B cell (primary cell): ENCODE measurements at regions of chr16 and their contacts with region 1.

Region 1: DNA sequence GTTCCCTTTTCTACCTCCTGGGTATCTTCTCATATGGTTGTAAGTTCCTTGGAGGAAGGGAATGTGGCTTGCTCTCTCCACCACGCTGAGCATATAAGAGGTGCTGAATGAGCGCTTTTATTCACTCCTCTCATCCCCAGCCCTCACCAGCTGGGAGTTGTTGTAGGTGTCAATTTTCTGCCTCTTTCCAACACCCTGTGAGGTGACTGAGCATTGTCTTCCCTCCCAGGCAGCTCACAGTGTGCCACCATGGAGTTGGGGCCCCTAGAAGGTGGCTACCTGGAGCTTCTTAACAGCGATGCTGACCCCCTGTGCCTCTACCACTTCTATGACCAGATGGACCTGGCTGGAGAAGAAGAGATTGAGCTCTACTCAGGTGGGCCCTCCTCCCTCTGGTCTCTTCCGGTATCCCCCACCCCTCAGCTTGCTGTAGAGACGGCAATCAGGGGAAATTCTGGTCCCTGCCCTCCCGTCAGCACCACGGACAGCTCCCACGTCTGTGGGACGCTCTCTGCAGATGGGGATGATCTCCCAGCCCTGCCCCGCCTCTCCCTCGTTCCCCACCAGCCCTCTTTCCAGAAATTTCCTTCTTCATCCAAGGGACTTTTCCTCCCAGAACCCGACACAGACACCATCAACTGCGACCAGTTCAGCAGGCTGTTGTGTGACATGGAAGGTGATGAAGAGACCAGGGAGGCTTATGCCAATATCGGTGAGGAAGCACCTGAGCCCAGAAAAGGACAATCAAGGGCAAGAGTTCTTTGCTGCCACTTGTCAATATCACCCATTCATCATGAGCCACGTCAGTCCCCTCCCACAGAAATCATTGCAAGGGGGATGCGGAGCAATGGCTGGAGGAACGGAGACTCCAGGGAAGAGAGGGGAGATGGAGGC is 18.3 kb downstream of the CIITA start:
- DNase-seq: peak; percentile 72
- ATAC-seq: no peak
- H3K4me3 ChIP-seq: no peak overlapping the region
- H3K4me3 Mint-ChIP-seq: peak overlapping the region; percentile 78
- H3K27ac ChIP-seq: peak overlapping the region; percentile 68 to 77
- H3K27ac Mint-ChIP-seq: peak overlapping the region; percentile 92
- H3K4me1 ChIP-seq: peaks cover 88 to 93% of the 10 kb centered on the region in 2 donors
- H3K4me1 Mint-ChIP-seq: peaks cover 93% of the 10 kb centered on the region
- H3K27me3 ChIP-seq: no peaks in the 10 kb centered on the region
- H3K27me3 Mint-ChIP-seq: no peaks in the 10 kb centered on the region
- CTCF ChIP-seq: no peak

Region 2: DNA sequence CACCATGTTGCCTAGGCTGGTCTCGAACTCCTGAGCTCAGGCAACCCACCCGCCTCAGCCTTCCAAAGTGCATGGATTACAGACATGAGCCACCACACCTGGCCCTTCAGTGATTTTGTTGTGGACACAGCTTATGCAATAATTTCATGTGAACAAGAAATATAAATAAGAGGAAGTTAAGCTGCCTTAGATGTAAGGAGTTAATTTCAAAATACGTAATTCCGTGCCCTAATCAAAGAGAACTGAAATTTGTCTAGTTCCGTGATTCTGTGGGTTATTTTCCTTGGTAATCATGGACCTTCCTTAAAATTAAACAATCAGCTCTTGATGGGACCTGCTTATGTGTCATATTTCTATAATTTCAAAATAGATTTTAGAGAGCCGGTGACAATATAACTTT is 88.6 kb before region 1 on chr16:
- CTCF ChIA-PET with region 1: interaction called, 4 read pairs
- POLR2A ChIA-PET with region 1: interaction called, 4 read pairs
- intact Hi-C with region 1: loop called (anchors 1 kb)
- DNase-seq: peak; percentile 44
- ATAC-seq: peak; percentile 37
- H3K4me3 ChIP-seq: no peak overlapping the region
- H3K4me3 Mint-ChIP-seq: peak overlapping the region; percentile 74
- H3K27ac ChIP-seq: no peak overlapping the region
- H3K27ac Mint-ChIP-seq: peak overlapping the region; percentile 84
- H3K4me1 ChIP-seq: peaks cover 8 to 45% of the 10 kb centered on the region in 2 donors
- H3K4me1 Mint-ChIP-seq: peaks cover 64% of the 10 kb centered on the region
- H3K27me3 ChIP-seq: no peaks in the 10 kb centered on the region
- H3K27me3 Mint-ChIP-seq: no peaks in the 10 kb centered on the region
- CTCF ChIP-seq: no peak

Region 3: DNA sequence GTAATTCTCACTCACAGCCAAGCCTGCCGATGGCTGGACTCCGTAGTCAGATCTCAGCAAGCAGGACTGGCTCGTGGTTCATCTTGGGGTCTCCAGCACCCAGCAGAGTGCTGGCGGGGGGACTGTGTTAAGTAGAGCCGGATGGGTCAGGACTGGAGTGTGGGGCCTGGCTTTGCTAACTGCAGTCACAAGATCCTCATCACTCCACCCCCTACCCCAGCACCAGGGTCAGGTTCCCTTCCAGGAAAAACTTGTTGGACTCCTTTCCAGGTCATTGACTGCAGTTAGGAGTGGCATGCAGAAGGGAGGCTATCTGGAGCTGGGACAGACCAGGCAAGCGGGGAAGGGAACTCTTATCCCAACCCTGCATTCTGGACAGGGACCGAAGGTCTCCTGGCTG is 12.3 kb before region 1 on chr16:
- CTCF ChIA-PET with region 1: interaction called, 120 read pairs
- POLR2A ChIA-PET with region 1: interaction called, 122 read pairs
- intact Hi-C with region 1: loop called (anchors 1 kb)
- DNase-seq: no peak
- ATAC-seq: no peak
- H3K4me3 ChIP-seq: peak overlapping the region in 2 of 5 experiments; percentile 4 to 8
- H3K4me3 Mint-ChIP-seq: peak overlapping the region; percentile 77
- H3K27ac ChIP-seq: peak overlapping the region; percentile 31 to 74
- H3K27ac Mint-ChIP-seq: peak overlapping the region; percentile 87
- H3K4me1 ChIP-seq: peaks cover 75 to 87% of the 10 kb centered on the region in 2 donors
- H3K4me1 Mint-ChIP-seq: peaks cover 74% of the 10 kb centered on the region
- H3K27me3 ChIP-seq: no peaks in the 10 kb centered on the region
- H3K27me3 Mint-ChIP-seq: no peaks in the 10 kb centered on the region
- CTCF ChIP-seq: no peak

Region 4: DNA sequence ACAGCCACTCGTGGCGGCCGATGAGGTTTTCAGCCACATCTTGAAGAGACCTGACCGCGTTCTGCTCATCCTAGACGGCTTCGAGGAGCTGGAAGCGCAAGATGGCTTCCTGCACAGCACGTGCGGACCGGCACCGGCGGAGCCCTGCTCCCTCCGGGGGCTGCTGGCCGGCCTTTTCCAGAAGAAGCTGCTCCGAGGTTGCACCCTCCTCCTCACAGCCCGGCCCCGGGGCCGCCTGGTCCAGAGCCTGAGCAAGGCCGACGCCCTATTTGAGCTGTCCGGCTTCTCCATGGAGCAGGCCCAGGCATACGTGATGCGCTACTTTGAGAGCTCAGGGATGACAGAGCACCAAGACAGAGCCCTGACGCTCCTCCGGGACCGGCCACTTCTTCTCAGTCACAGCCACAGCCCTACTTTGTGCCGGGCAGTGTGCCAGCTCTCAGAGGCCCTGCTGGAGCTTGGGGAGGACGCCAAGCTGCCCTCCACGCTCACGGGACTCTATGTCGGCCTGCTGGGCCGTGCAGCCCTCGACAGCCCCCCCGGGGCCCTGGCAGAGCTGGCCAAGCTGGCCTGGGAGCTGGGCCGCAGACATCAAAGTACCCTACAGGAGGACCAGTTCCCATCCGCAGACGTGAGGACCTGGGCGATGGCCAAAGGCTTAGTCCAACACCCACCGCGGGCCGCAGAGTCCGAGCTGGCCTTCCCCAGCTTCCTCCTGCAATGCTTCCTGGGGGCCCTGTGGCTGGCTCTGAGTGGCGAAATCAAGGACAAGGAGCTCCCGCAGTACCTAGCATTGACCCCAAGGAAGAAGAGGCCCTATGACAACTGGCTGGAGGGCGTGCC is 11.8 kb after region 1 on chr16:
- CTCF ChIA-PET with region 1: interaction called, 141 read pairs
- POLR2A ChIA-PET with region 1: interaction called, 41 read pairs
- intact Hi-C with region 1: loop called (anchors 1 kb)
- DNase-seq: no peak
- ATAC-seq: no peak
- H3K4me3 ChIP-seq: no peak overlapping the region
- H3K4me3 Mint-ChIP-seq: no peak overlapping the region
- H3K27ac ChIP-seq: peak overlapping the region in 1 of 2 donors; percentile 95
- H3K27ac Mint-ChIP-seq: peak overlapping the region; percentile 67
- H3K4me1 ChIP-seq: peaks cover 43 to 55% of the 10 kb centered on the region in 2 donors
- H3K4me1 Mint-ChIP-seq: peaks cover 70% of the 10 kb centered on the region
- H3K27me3 ChIP-seq: no peaks in the 10 kb centered on the region
- H3K27me3 Mint-ChIP-seq: no peaks in the 10 kb centered on the region
- CTCF ChIP-seq: no peak

Region 5: DNA sequence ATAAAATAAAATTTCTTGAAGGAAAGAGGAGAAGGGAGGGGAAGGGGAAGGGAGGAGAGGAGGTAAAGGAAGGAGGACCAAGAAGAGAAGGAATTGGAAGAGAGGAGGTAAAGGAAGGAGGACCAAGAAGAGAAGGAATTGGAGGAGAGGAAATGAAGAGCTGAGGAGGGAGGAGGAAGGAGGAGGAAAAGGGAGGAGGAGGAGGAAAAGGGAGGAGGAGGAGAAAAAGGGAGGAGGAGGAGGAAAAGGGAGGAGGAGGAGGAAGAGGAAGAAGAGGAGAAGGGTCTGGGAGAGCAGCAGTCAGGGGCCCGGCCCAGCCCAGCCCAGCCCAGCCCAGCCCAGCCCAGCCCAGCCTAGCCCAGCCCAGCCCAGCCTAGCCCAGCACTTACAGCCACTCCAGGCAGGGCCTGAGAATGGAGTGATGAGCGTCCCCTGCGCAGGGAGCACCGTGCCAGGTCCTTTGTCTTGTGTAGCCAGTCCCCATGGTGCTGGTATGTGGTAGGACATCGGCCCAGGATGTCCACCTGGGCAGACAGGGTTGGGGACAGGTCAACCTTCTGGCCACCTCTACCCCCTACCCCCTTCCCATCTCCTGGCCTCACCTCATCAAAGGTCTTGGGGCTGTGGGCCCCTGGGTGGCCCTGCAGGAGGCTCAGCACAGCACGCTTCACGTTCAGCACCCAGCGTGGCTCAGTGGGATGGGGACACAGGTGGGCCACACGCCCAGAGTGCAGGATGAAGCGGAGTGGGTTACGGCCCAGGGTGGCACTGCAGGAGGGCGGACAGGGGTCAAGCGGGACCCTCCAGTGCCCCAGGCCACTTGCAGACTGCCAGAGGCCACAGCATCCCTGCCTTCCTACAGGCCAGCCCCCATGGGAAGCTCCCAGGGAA is 620.5 kb after region 1 on chr16:
- CTCF ChIA-PET with region 1: no interaction called
- POLR2A ChIA-PET with region 1: interaction called, 10 read pairs
- intact Hi-C with region 1: no loop called
- DNase-seq: no peak
- ATAC-seq: no peak
- H3K4me3 ChIP-seq: no peak overlapping the region
- H3K4me3 Mint-ChIP-seq: no peak overlapping the region
- H3K27ac ChIP-seq: no peak overlapping the region
- H3K27ac Mint-ChIP-seq: no peak overlapping the region
- H3K4me1 ChIP-seq: peaks cover 0 to 8% of the 10 kb centered on the region in 2 donors
- H3K4me1 Mint-ChIP-seq: peaks cover 8% of the 10 kb centered on the region
- H3K27me3 ChIP-seq: no peaks in the 10 kb centered on the region
- H3K27me3 Mint-ChIP-seq: no peaks in the 10 kb centered on the region
- CTCF ChIP-seq: no peak